Activated CD4-positive, alpha-beta memory T cell treated with anti-CD3 and anti-CD28 coated beads, Interleukin-2, amount 10 ng/mL, durations not matched to agents 7 days and 5 days (primary cell): ENCODE measurements at regions of chr2 and their contacts with region 1.

Region 1: DNA sequence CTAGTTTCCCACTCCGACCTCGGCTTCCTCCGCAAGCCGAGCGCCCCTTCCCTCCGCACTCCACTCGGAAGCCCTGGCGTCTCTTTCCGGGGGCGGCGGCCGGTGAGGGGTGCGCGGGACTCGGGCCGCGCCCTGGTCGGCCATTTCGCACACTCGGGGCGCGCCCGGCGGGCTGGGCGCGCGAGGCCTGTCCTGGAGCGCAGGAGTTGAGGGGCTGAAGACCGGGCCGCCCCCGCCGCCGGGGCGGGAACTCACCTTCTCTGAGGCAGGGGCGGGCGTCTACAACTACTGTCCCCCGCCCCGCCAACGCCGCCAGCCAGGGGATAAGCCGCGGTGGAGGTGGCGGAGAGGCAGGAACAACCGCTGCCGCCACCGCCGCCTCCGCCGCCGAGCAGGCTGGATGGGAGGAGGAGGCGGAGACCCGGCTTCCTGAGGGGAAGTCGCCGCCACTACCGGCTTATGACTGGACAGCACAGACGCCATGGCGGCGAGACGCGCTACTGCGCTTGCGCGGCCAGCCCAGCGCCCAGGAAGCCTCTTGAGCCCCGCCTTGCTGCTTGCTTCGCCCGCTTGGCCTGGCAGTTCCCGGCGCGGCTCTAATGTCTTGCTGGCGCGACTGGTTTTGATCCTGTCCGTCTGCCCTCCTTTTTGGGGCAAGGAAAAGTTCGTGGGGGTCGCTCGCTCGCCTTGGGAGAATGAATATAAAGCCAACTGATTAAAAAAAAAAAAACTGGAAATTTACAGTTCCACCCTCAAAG is at the start of gene KRCC1:
- DNase-seq: peak; percentile 95
- H3K4me3 Mint-ChIP-seq: peak within 1 kb of the TSS; percentile 93
- H3K27ac Mint-ChIP-seq: peak within 1 kb of the TSS; percentile 84
- H3K4me1 Mint-ChIP-seq: peaks cover 38% of the 10 kb centered on the region
- H3K27me3 Mint-ChIP-seq: no peaks in the 10 kb centered on the region
- total RNA-seq, gene KRCC1: 18.8 to 19.1 TPM

Region 2: DNA sequence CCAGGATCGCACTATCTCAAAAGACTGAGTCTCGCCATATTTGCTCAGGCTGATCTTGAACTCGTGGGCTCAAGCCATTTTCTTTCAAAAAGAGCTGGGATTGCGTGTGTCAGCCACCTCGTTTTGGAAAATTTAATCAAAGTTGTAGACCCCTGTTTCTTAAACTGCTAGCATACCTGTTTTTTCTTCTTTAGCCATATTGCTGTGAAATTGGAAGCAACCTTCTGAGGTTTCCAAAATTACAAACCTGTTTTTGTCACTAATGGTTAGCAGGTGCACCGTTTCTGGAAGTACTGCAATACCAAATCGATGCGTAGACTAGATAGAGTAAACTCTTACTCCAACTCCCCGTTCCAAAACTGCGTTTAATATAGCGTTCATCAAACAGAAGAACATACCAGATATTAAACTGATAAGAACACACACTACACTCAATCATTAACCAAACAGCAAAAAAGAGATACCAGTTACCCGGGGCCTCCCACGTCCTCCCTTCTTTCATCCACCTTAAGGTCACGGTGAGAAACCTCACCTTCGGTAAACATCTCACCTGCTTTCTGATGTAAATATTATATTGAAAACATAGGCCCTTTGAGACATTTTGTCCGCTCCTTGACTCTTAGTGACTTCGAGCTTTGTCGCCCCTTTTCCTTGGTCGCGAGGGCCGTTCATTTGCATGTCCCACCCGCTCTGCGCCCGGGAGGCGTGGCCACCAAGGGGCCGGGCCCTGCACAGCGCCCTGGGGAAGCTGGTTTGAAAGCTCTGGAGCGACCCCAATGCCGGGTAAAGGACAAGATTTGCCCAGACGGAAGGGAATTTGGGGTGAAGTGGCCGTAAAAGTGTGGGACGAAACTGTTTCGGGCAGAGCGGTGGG is 39.2 kb before region 1 on chr2 and contains the start of gene RNU2-63P:
- CTCF ChIA-PET with region 1: interaction called, 8 read pairs
- POLR2A ChIA-PET with region 1: interaction called, 73 read pairs
- DNase-seq: peak; percentile 77
- H3K4me3 Mint-ChIP-seq: peak within 1 kb of the TSS; percentile 97
- H3K27ac Mint-ChIP-seq: peak within 1 kb of the TSS; percentile 94
- H3K4me1 Mint-ChIP-seq: peaks cover 21% of the 10 kb centered on the region
- H3K27me3 Mint-ChIP-seq: no peaks in the 10 kb centered on the region
- total RNA-seq, gene RNU2-63P: 14.6 to 16.1 TPM

Region 3: DNA sequence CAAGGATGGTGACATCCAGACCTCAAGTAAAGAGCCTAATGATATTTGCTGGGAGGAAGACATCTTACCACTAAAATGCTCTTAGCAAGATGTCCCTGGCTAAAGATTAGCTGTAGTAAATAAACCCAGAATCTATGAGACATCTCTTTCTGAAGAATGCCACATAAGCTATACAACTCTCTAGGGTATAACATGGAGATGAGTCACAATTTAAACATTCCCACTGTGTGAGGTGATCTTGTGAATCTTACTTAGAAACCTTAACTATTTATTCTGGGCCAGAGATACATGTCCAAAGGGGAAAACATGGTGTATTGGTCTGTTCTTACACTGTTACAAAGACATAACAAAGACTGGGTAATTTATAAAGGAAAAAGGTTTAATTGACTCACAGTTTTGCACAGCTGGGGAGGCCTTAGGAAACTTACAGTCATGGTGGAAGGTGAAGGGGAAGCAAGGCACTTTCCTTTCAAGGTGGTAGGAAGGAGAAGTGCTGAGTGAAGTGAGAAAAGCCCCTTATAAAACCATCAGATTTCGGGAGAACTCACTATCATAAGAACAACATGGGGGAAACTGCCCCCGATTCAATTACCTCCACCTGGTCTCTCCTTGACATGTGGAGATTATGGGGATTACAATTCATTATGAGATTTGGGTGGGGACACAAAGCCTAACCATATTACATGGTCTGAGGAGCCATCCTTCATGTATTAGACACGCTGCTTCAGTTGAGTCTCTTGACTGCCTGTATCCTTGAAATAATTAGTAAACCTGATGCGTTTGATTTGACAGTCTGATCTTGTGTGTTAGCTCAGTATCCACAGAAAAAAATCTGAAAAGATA is 17.1 kb before region 1 on chr2:
- CTCF ChIA-PET with region 1: interaction called, 10 read pairs
- POLR2A ChIA-PET with region 1: interaction called, 6 read pairs
- DNase-seq: no peak
- H3K4me3 Mint-ChIP-seq: no peak overlapping the region
- H3K27ac Mint-ChIP-seq: no peak overlapping the region
- H3K4me1 Mint-ChIP-seq: peaks cover 3% of the 10 kb centered on the region
- H3K27me3 Mint-ChIP-seq: no peaks in the 10 kb centered on the region

Region 4: GRCh38 chr2:88069117-88069516 is 13.6 kb after region 1 on chr2:
- CTCF ChIA-PET with region 1: interaction called, 13 read pairs
- POLR2A ChIA-PET with region 1: no interaction called
- DNase-seq: no peak
- H3K4me3 Mint-ChIP-seq: no peak overlapping the region
- H3K27ac Mint-ChIP-seq: no peak overlapping the region
- H3K4me1 Mint-ChIP-seq: no peaks in the 10 kb centered on the region
- H3K27me3 Mint-ChIP-seq: peaks cover 5% of the 10 kb centered on the region

Region 5: GRCh38 chr2:88159955-88160415 is 104.4 kb after region 1 on chr2:
- CTCF ChIA-PET with region 1: interaction called, 88 read pairs
- POLR2A ChIA-PET with region 1: interaction called, 4 read pairs
- DNase-seq: peak; percentile 45
- H3K4me3 Mint-ChIP-seq: no peak overlapping the region
- H3K27ac Mint-ChIP-seq: no peak overlapping the region
- H3K4me1 Mint-ChIP-seq: no peaks in the 10 kb centered on the region
- H3K27me3 Mint-ChIP-seq: peaks cover 10% of the 10 kb centered on the region

Region 6: DNA sequence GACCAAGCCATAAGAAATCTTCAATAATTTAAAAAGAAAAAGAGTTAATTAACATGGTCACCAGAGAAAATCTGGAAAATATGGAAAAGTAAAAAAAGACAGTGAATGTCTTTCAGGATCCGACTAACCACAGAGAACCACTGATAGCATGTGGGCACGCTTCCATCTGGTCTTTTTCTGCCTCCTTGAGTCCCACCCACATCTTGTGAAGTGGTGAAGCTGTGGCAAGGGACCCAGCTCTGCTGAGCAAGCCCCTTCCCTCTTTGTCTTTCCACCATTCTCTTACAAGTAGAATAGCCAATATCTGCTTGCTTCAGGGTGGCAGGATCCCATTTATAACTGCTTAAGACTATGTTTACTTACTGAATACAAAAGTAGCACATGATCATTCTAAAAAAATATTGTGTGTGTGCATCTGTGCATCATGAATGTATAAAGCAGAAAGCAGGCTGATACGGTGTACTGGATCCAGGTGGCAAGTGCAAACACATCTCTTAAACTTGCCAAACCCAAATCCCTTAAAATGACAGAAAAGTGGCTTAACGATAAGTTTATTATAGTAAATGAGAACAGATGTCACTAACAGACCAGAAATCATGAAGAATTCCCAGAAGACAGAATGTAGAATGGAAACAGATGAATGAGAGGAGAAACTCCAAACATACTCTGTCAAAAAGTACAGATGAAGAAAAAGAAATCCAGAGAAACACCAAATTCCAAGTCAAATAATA is 344.7 kb after region 1 on chr2:
- CTCF ChIA-PET with region 1: no interaction called
- POLR2A ChIA-PET with region 1: no interaction called
- DNase-seq: no peak
- H3K4me3 Mint-ChIP-seq: no peak overlapping the region
- H3K27ac Mint-ChIP-seq: no peak overlapping the region
- H3K4me1 Mint-ChIP-seq: no peaks in the 10 kb centered on the region
- H3K27me3 Mint-ChIP-seq: peaks cover 3% of the 10 kb centered on the region